ENCODE measurements at regions of chr3 and their contacts with region 1.

Region 1: DNA sequence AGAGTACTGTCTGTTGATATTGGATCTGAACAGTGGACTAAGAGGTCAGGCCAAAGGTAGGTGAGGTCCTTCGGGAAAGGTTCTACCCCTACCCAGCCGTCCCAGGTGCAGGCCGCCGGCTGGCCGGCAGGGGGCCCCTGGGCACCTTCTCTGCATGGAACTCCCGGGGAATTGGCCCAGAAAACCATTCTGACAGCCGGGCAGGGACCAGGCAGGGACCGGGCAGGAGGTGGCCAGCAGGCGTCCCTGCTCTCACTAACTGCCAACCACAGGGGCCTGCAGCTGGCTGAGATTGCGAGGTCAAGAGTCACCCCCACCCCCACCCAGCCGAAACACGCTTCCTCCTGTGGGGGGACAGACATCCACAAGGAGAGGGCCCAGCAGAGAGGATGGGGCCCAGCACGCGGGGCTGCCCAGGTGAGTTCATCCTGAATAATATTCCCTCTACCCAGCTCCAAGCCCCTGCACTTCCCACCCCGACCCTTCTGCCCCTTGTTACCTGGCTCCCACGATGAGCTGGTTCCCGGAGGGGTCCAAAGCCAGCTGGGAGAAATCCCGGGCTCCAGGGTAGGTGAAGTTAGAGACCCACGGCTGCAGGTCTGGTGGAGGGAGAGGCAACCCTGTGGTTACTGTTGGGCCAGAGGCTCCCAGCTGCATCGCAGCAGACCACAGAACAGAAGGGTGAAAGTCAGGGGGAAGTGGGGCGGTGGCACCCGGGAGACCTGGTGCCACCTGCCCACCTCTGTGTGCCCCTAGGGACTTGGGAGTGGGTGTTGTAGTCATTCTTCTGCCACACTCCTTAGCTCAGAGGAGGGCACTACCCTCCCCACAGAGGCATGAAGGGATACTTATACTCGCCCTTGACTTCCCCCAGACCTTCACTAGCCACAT is 84.4 kb downstream of the SEMA5B start:
- DNase-seq: peak; percentile 84 to 91 (median 87)
- H3K4me3 ChIP-seq: no peak overlapping the region
- H3K27ac ChIP-seq: no peak overlapping the region
- H3K4me1 ChIP-seq: peaks cover 0 to 4% (median 0%) of the 10 kb centered on the region in 3 donors
- H3K27me3 ChIP-seq: no peaks in the 10 kb centered on the region
- CTCF ChIP-seq: peak; percentile 87

Region 2: DNA sequence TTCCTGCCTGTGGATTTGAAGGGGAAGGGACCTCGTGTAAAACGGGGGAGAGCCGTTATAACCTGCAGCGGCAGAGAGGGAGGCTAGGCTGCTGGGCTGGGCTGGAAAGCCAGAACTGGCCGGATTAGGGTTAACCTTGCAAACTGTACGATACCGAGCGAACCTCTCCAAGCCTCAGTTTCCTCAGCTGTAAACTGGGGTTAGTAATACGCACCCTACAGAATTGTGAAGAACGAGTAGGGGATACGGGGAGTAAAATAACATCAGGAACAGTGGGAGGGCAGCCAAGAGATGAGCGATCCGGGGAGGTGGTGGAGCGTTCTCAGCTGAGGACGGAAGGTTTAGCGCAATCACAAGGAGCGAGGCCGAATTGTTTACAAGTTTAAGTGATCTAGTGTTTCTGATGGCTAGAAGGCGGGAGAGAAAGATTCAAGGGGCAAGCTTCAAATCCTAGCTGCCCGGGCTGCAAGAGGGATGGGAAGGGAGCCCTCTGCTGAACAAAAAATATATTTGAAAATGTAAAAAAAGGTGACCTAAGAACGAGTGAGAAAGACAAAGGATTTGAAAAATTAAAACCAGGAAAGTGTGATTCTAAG is 85.1 kb after region 1 on chr3:
- intact Hi-C with region 1: loop called (anchors 5 kb)
- DNase-seq: peak in 4 of 5 donors; percentile 62 to 93 (median 78)
- H3K4me3 ChIP-seq: peak overlapping the region; percentile 51 to 73 (median 57)
- H3K27ac ChIP-seq: no peak overlapping the region
- H3K4me1 ChIP-seq: peaks cover 0 to 16% (median 6%) of the 10 kb centered on the region in 3 donors
- H3K27me3 ChIP-seq: no peaks in the 10 kb centered on the region
- CTCF ChIP-seq: peak; percentile 25